Left cardiac atrium (tissue), 4 donors: ENCODE measurements at regions of chr7 and their contacts with region 1.

Region 1: DNA sequence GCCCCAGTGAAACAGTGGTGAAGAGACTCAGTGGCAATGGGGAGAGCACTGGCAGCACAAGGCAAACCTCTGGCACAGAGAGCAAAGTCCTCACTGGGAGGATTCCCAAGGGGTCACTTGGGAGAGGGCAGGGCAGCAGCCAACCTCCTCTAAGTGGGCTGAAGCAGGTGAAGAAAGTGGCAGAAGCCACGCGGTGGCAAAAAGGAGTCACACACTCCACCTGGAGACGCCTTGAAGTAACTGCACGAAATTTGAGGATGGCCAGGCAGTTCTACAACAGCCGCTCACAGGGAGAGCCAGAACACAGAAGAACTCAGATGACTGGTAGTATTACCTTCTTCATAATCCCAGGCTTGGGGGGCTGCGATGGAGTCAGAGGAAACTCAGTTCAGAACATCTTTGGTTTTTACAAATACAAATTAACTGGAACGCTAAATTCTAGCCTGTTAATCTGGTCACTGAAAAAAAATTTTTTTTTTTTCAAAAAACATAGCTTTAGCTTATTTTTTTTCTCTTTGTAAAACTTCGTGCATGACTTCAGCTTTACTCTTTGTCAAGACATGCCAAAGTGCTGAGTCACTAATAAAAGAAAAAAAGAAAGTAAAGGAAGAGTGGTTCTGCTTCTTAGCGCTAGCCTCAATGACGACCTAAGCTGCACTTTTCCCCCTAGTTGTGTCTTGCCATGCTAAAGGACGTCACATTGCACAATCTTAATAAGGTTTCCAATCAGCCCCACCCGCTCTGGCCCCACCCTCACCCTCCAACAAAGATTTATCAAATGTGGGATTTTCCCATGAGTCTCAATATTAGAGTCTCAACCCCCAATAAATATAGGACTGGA is 435 bp upstream of the IL6 start:
- DNase-seq: peak; percentile 58
- ATAC-seq: peak; percentile 45 to 61

Region 2: GRCh38 chr7:22586786-22587140 is 139.8 kb before region 1 on chr7:
- intact Hi-C with region 1: loop called in 1 of 2 experiments (anchors 5 kb)
- DNase-seq: no peak
- ATAC-seq: peak; percentile 14 to 43

Region 3: GRCh38 chr7:22647451-22648257 is 78.9 kb before region 1 on chr7:
- intact Hi-C with region 1: no loop called
- DNase-seq: no peak
- ATAC-seq: peak in 1 of 2 donors; percentile 91

Region 4: DNA sequence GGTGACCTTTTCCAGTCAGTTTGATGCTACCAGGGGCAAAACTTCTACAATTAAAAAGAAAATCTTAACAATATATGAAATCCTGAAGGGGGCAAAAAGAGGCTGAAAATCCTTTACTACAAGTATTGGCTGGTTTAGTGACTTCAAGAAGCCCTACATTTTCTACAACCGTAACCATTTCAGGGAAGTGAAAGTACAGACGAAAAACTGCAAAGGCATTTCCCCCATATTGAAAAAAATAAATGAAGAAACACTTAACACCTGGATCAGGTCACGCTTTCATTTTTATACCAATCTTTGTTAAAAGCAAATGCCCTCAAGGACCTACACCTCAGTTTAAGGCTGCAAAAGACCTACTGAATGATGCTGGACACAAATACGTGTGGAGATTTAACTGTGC is 39.0 kb after region 1 on chr7:
- intact Hi-C with region 1: no loop called
- DNase-seq: no peak
- ATAC-seq: no peak